Heart left ventricle (tissue), 16 donors: ENCODE measurements at regions of chr11 and their contacts with region 1.

Region 1: GRCh38 chr11:68354148-68354872 is 41.9 kb downstream of the LRP5 start:
- DNase-seq: peak; percentile 76 to 94 (median 89)
- ATAC-seq: peak; percentile 84 to 91 (median 86)
- H3K4me3 ChIP-seq: no peak overlapping the region
- H3K27ac ChIP-seq: peak overlapping the region; percentile 66 to 95 (median 86)
- H3K4me1 ChIP-seq: peaks cover 0 to 58% (median 31%) of the 10 kb centered on the region in 12 donors
- H3K27me3 ChIP-seq: no peaks in the 10 kb centered on the region
- CTCF ChIP-seq: no peak
- POLR2A ChIP-seq: no peak

Region 2: DNA sequence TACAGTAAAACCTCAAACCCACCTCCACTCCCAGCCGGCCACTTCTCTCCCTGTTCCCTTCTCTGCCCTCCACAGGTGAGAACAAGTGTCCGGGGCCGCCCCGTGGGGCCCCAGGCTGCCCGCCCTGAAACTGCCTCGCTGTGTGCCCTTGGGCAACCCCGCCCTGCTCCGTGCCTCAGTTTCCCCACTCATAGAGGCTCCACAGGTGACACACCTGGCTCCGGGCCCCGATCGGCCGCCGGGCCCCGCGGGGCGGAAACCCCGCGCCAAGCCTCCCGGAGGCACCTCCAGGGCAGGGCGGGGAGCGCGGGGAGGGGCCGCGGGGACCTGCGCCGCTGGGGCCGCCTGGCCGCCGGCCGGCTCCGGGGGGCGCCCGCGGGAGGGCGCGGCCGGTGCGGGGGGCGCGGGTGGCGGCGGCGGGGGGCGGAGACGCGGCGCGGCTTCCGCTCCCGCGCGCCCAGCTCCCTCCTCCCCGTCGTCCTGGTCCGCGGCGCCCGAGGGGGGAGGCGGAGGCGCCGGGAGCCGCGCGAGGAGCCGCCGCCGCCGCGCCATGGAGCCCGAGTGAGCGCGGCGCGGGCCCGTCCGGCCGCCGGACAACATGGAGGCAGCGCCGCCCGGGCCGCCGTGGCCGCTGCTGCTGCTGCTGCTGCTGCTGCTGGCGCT is 42.1 kb before region 1 on chr11 and contains the start of gene LRP5:
- intact Hi-C with region 1: loop called in 1 of 10 experiments (anchors 5 kb)
- DNase-seq: peak in 2 of 5 donors; percentile 31 to 46
- ATAC-seq: peak in 2 of 4 donors; percentile 21 to 22
- H3K4me3 ChIP-seq: peak within 1 kb of the TSS; percentile 25 to 94 (median 72)
- H3K27ac ChIP-seq: peak within 1 kb of the TSS; percentile 47 to 93 (median 84)
- H3K4me1 ChIP-seq: peaks cover 0 to 51% (median 37%) of the 10 kb centered on the region in 12 donors
- H3K27me3 ChIP-seq: peaks cover 0 to 3% (median 0%) of the 10 kb centered on the region in 9 donors
- CTCF ChIP-seq: no peak
- POLR2A ChIP-seq: no peak
- total RNA-seq, gene LRP5: 34.5 to 62.5 (median 39.8) TPM

Region 3: GRCh38 chr11:68364581-68364980 is 10.3 kb after region 1 on chr11:
- intact Hi-C with region 1: loop called in 1 of 10 experiments (anchors 1 kb)
- DNase-seq: no peak
- ATAC-seq: no peak
- H3K4me3 ChIP-seq: no peak overlapping the region
- H3K27ac ChIP-seq: no peak overlapping the region
- H3K4me1 ChIP-seq: peaks cover 0 to 6% (median under 1%) of the 10 kb centered on the region in 12 donors
- H3K27me3 ChIP-seq: no peaks in the 10 kb centered on the region
- CTCF ChIP-seq: no peak
- POLR2A ChIP-seq: no peak

Region 4: GRCh38 chr11:68370211-68371111 is 16.2 kb after region 1 on chr11:
- intact Hi-C with region 1: loop called in 1 of 10 experiments (anchors 2 kb)
- DNase-seq: peak in 3 of 5 donors; percentile 46 to 75 (median 69)
- ATAC-seq: peak; percentile 35 to 71 (median 48)
- H3K4me3 ChIP-seq: no peak overlapping the region
- H3K27ac ChIP-seq: peak overlapping the region; percentile 61 to 92 (median 84)
- H3K4me1 ChIP-seq: peaks cover 21 to 61% (median 55%) of the 10 kb centered on the region in 12 donors
- H3K27me3 ChIP-seq: no peaks in the 10 kb centered on the region
- CTCF ChIP-seq: no peak
- POLR2A ChIP-seq: peak in 1 of 2 donors; percentile 17